A549 (cell line): ENCODE measurements at regions of chr9 and their contacts with region 1.

Region 1: DNA sequence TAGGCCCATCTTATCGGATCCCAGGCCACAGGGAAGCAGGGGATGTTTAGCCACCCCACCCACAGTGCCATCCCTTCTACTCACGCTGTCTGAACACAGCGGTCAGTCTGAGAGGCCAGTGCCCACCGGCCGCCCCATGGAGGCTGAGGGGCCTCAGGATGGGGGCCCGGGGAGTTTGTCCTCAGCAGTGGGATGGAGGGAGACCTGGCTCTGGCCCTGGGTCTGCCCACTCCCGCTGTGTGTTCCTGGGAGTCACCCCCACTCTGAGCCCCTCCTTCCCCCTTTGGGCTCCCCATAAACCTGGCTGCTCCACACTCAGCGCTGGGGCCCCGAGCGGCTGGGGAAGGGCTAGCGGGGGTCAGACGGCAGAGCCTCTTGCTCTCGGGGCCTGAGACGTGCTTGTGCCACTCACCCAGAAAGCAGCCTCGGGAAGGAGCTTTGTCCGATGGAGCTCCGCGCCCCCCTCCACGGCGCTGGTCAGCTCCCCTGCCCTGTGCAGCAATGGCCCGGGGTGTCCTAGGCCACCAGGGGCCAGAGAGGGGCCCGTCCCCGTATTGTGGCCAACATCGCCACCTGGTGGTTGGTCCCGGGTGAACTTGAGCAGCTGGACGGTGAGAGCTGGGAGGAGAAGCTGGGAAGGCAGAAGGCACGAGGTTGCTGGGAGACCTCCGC is 10.9 kb upstream of the LAMC3 start:
- DNase-seq: peak; percentile 75 to 95
- ATAC-seq: peak; percentile 84 to 96
- H3K4me3 ChIP-seq: no peak overlapping the region
- H3K27ac ChIP-seq: peak overlapping the region; percentile 35 to 46; a peak in 2 of 6 replicates
- H3K4me1 ChIP-seq: peaks cover 26% of the 10 kb centered on the region
- CTCF ChIP-seq: peak; percentile 83
- EP300 ChIP-seq: no peak
- POLR2A ChIP-seq: no peak
- RAD21 ChIP-seq: peak; percentile 94

Region 2: GRCh38 chr9:130866474-130866965 is 131.5 kb before region 1 on chr9:
- CTCF ChIA-PET with region 1: interaction called, 286 read pairs
- POLR2A ChIA-PET with region 1: no interaction called
- DNase-seq: peak; percentile 79 to 93
- ATAC-seq: peak; percentile 97
- H3K4me3 ChIP-seq: no peak overlapping the region
- H3K27ac ChIP-seq: no peak overlapping the region
- H3K4me1 ChIP-seq: no peaks in the 10 kb centered on the region
- CTCF ChIP-seq: peak; percentile 95
- EP300 ChIP-seq: no peak
- POLR2A ChIP-seq: no peak
- RAD21 ChIP-seq: peak; percentile 76 to 78

Region 3: DNA sequence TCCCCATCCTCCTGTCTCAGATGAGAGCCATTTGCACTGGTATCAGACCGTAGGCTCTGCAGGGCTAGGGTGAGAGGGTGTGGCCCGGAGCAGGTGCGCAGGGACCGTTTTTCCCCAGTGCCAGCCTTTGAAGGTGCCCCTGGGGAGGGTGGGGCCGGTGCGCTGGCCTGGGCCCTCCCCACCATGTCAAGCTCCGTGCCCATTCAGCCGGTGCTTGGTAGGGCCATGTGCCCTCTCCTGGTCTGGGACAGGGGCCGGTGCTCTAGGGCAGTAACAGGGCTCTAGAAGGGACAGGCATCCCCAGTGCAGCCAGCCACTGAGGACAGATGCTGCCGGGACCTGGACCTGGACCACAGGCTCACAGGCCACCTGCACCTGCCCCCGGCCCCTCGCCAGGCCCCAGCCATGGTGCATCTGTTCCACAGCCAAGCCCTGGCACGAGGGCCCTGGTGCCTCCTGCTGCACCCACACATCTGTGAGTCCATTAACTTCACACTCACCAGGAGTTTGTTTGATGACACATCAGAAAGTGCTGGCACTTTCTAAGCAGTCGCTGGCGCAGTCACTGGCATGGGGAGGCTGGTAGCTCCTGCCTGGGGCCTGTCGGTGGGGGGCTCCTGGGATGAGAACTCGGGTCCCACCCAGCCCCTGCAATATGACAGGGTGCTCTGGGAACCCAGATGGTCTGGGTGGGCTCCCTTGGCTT is 96.4 kb before region 1 on chr9:
- CTCF ChIA-PET with region 1: interaction called, 22 read pairs
- POLR2A ChIA-PET with region 1: no interaction called
- DNase-seq: no peak
- ATAC-seq: peak in 1 of 2 experiments; percentile 9; a peak in 1 of 6 replicates
- H3K4me3 ChIP-seq: no peak overlapping the region
- H3K27ac ChIP-seq: no peak overlapping the region
- H3K4me1 ChIP-seq: no peaks in the 10 kb centered on the region
- CTCF ChIP-seq: no peak
- EP300 ChIP-seq: no peak
- POLR2A ChIP-seq: no peak
- RAD21 ChIP-seq: no peak

Region 4: GRCh38 chr9:130940693-130941576 is 57.1 kb before region 1 on chr9:
- CTCF ChIA-PET with region 1: interaction called, 78 read pairs
- POLR2A ChIA-PET with region 1: no interaction called
- DNase-seq: peak; percentile 73 to 74
- ATAC-seq: peak; percentile 54 to 74
- H3K4me3 ChIP-seq: no peak overlapping the region
- H3K27ac ChIP-seq: peak overlapping the region in 1 of 2 experiments; percentile 12; a peak in 1 of 6 replicates
- H3K4me1 ChIP-seq: peaks cover 46% of the 10 kb centered on the region
- CTCF ChIP-seq: peak; percentile 82
- EP300 ChIP-seq: no peak
- POLR2A ChIP-seq: no peak
- RAD21 ChIP-seq: peak; percentile 87 to 89

Region 5: GRCh38 chr9:130973169-130973936 is 24.7 kb before region 1 on chr9:
- CTCF ChIA-PET with region 1: interaction called, 13 read pairs
- POLR2A ChIA-PET with region 1: no interaction called
- DNase-seq: no peak
- ATAC-seq: peak; percentile 28 to 31
- H3K4me3 ChIP-seq: no peak overlapping the region
- H3K27ac ChIP-seq: no peak overlapping the region
- H3K4me1 ChIP-seq: no peaks in the 10 kb centered on the region
- CTCF ChIP-seq: no peak
- EP300 ChIP-seq: no peak
- POLR2A ChIP-seq: no peak
- RAD21 ChIP-seq: no peak

Region 6: DNA sequence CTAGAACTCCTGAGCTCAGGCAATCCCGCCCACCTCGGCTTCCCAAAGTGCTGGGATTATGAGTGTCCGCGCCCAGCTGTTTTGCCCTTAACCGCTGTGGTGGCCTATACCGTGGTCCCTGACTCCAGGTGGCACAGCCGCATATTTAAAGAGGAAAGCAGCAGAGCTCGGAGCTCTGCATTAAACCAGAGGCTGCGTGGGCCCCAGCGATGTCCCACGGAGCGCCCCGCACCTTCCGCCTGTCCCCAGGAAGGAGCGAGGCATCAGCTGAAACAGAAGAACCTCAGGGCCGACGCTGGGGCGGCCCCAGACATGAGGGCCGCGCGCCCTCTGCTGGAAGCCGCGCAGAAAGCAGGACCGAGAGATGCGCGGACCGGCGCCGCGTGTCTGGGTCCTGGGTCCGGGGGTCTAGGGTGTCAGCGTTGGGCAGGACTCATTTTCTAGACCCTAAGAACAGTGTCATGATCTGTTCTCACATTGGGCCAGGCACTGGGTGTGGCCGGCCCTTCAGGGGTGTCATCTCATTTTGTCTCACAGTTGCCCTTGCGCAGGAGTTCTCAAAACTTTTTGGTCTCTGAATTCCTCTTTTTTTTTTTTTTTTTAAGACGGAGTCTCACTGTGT is 48.6 kb after region 1 on chr9:
- CTCF ChIA-PET with region 1: interaction called, 39 read pairs
- POLR2A ChIA-PET with region 1: no interaction called
- DNase-seq: peak; percentile 65 to 69
- ATAC-seq: peak; percentile 83 to 96
- H3K4me3 ChIP-seq: no peak overlapping the region
- H3K27ac ChIP-seq: no peak overlapping the region
- H3K4me1 ChIP-seq: no peaks in the 10 kb centered on the region
- CTCF ChIP-seq: peak; percentile 95
- EP300 ChIP-seq: no peak
- POLR2A ChIP-seq: no peak
- RAD21 ChIP-seq: peak; percentile 89 to 94